GM10248 (cell line): ENCODE measurements at regions of chr6 and their contacts with region 1.

Region 1: DNA sequence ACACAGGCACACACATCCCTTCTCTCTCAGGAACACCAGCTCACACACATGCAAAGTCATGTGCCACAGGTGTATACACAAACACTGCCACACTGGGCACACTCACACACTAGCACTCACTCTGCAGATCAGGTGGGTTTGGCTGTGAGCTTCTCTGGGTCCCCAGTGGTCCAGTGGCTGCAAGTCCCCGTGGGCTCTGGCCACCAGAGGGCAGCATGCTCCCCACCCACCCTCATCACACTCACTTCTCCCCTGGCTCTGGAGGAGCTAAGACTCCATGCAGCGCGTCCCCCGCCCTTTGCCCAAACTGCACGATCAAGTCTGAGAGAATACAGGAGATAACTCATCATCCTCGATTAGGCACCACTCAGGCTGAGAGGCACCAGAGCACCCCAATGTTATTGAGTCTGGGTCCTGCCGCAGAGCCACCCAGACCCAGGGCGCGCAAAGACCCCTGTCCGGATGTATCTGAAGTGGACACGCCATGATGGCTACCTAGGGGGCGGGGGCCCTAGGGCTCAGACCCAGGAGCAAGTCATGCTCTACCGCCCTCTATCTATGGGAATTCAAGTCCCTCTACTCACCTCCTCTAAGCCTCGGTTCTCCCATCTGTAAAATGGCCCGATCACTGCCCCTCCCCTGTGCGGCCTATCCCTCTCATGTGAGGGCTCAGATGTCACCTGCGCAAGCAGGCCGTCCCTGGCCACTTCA is 90.5 kb downstream of the GRM4 start:
- DNase-seq: peak; percentile 79
- CTCF ChIP-seq: peak; percentile 71

Region 2: GRCh38 chr6:34067814-34068213 is 12.4 kb after region 1 on chr6:
- CTCF ChIA-PET with region 1: interaction called, 15 read pairs
- POLR2A ChIA-PET with region 1: no interaction called
- DNase-seq: no peak
- CTCF ChIP-seq: peak; percentile 24

Region 3: GRCh38 chr6:34154668-34155447 is 99.5 kb after region 1 on chr6:
- CTCF ChIA-PET with region 1: interaction called, 48 read pairs
- POLR2A ChIA-PET with region 1: no interaction called
- DNase-seq: peak; percentile 89
- CTCF ChIP-seq: peak; percentile 91